CD14-positive monocyte (primary cell): ENCODE measurements at regions of chr5 and their contacts with region 1.

Region 1: DNA sequence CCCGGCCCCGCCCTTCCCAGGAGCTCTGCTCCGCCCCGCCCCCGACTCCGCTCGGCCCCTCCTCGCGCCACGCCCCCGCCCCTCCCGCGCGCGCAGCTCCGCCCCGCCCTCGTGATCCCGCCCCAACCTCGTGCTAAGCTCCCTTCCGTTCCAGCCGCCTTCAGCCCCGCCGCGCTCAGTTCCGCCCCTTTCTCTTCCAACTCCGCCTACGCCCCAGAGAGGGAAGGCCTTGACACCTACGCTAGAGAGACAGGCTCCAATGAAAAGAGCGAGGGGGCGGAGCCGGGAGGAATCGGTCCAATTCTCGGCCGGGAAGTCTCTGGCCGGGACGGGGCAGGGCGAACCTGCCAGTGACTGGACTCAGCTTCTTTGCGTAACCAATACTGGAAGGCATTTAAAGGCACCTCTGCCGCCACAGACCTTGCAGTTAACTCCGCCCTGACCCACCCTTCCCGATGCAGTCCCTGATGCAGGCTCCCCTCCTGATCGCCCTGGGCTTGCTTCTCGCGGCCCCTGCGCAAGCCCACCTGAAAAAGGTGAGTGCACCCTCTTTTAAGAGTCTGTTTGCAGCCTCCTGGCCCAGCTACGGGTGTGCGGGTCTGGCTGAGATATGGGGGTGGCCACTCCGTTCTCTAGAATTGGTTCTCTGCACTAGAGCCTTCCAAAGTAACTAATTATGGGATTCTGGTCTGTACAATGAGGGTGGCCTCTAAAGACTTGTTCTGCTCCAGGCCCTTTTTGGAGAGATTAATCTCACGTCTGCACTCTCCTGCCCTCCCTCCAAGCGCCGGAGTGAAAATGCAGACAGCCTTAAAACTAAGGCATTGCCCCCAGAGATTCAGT is at the start of gene GM2A:
- DNase-seq: peak; percentile 99 to 100 (median 100)
- H3K4me3 ChIP-seq: peak within 1 kb of the TSS; percentile 78 to 99 (median 81)
- H3K4me3 Mint-ChIP-seq: peak within 1 kb of the TSS; percentile 96 to 99
- H3K27ac ChIP-seq: peak within 1 kb of the TSS; percentile 91 to 94
- H3K27ac Mint-ChIP-seq: peak within 1 kb of the TSS; percentile 95 to 100 (median 97)
- H3K4me1 ChIP-seq: peaks cover 55 to 71% of the 10 kb centered on the region in 2 donors
- H3K4me1 Mint-ChIP-seq: peaks cover 61% of the 10 kb centered on the region
- H3K27me3 ChIP-seq: no peaks in the 10 kb centered on the region
- H3K27me3 Mint-ChIP-seq: peaks cover 0 to 4% (median 0%) of the 10 kb centered on the region in 3 donors
- CTCF ChIP-seq: no peak
- polyA plus RNA-seq, gene GM2A: 22.2 to 57.9 (median 28.0) TPM

Region 2: DNA sequence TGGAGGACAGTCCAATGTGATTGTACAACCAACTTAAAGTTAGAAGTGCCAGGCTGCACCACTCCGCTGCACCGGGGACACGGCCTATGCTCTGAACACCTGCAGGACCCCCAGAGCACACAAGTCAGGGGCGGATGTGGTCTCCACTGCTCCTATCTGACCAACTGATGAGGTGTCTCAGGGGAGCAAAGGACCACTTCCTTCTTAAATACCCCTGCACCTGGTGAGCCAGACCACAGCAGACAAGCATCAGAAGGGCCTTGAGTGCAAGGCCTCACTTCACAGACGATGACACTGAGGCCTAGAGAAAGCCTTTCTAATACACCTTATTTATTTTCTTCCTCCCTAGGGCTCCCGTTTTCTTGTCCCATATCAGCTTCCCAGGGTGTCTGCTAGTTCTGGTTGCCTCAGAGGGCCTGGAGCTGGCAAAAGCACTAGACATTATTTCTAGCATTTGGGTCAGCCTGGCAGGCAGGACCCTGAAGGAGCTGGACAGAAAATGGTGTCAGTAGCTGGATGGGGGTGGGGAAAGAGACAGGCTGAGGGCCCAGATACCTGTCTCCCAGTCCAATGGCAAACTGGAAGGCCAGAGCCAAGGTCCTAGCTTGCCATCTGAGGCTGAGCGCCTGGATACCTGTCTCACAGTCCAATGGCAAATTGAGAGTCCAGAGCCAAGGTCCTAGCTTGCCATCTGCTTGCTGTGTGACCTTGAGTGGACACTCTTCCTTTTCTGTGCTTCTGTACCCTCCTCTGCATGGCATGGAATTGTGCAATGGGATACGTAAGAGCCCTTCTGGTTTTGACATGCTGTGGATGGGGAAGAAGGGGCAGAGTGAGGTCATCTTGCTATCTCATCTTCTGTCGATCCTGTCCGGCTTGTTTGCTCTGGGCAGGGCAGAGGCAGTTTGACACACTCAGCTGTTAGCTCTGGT is 38.1 kb before region 1 on chr5:
- intact Hi-C with region 1: loop called in 1 of 2 experiments (anchors 5 kb)
- DNase-seq: peak; percentile 94 to 98 (median 96)
- H3K4me3 ChIP-seq: peak overlapping the region; percentile 0 to 64 (median 7)
- H3K4me3 Mint-ChIP-seq: peak overlapping the region; percentile 68 to 85
- H3K27ac ChIP-seq: peak overlapping the region; percentile 90 to 99
- H3K27ac Mint-ChIP-seq: peak overlapping the region; percentile 100
- H3K4me1 ChIP-seq: peaks cover 91 to 98% of the 10 kb centered on the region in 2 donors
- H3K4me1 Mint-ChIP-seq: peaks cover 88% of the 10 kb centered on the region
- H3K27me3 ChIP-seq: no peaks in the 10 kb centered on the region
- H3K27me3 Mint-ChIP-seq: peaks cover 0 to 1% (median 1%) of the 10 kb centered on the region in 3 donors
- CTCF ChIP-seq: no peak